ENCODE measurements at regions of chr3 and their contacts with region 1.

Region 1: DNA sequence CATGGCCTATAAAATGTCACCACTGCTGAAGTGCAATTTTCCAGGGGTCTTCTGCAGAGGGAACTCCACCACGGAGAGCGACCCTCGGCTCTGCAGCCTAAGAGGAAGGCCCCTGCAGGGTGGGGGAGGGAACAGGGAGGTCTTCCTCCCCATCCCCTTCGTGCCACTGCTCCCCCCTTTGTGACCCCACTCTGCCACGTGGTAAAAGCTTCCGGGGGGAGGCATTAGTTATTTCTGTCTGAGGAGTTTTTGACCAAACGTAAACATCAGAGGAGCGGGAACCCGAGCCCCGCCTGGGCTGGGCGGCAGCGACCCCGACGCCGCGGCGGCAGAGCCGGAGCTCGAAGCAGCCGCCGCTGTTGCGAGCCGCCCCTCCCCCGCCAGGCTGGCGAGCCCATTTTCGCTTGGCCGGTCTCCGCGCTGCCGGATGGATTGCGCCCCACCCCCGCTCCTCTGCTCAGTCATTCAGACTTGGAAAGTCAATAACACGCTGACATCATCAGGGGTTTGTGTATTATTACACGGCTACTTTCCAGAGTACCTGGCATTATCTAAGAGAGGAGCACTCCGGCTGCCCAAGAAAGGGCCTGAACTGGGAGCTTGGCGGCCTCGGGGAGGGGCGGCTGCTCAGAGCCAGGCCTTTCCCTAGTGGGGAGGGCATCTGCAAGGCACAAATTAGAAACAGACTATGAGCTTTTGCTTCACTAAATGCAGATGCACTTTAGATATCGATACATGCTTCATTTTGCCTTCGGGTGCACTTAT is 162.5 kb upstream of the TBL1XR1 start:
- DNase-seq: peak; percentile 97
- H3K4me3 Mint-ChIP-seq: peak overlapping the region; percentile 70
- H3K27ac Mint-ChIP-seq: peak overlapping the region; percentile 94
- H3K4me1 Mint-ChIP-seq: peaks cover 55% of the 10 kb centered on the region
- H3K27me3 Mint-ChIP-seq: no peaks in the 10 kb centered on the region

Region 2: GRCh38 chr3:177057768-177058167 is 302.0 kb before region 1 on chr3:
- CTCF ChIA-PET with region 1: interaction called, 4 read pairs
- POLR2A ChIA-PET with region 1: interaction called, 4 read pairs
- intact Hi-C with region 1: loop called (anchors 1 kb)
- DNase-seq: peak; percentile 80
- H3K4me3 Mint-ChIP-seq: no peak overlapping the region
- H3K27ac Mint-ChIP-seq: no peak overlapping the region
- H3K4me1 Mint-ChIP-seq: peaks cover 39% of the 10 kb centered on the region
- H3K27me3 Mint-ChIP-seq: no peaks in the 10 kb centered on the region

Region 3: DNA sequence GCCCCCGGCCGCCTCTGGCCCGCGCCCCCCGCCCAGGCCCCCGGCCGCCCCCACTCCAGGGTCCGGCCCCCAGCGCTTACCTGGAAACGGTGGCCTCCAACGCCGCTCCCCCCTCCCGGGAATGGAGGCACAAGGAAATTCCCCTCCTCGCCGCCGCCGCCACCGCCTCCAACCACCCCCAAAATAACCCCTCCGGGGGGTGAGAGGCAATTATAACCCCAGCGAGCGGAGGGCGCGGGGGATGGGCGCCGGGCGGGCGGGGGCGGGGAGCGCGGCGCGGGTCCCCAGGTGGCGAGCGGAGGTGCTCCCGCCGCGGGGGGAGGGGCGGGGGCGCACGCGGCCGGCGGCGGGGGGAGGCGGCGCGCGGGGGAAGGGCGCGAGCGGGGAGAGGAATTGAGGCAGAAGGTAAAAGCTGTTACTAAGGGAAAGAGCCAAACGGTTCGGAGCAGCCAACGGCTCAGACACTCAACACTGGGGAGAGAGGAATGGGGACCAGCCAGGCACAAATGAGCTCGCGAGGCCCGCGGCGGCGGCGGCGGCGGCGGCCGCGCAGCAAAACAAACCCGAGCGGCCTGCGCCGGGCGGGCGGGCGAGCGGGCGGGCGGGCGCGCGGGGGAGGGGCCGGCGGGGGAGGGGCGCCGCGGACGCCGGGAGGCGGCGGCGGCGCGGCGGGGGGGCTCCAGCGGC is 162.6 kb before region 1 on chr3 and contains the start of gene TBL1XR1:
- CTCF ChIA-PET with region 1: interaction called, 6 read pairs
- POLR2A ChIA-PET with region 1: interaction called, 79 read pairs
- intact Hi-C with region 1: loop called (anchors 1 kb)
- DNase-seq: peak; percentile 89
- H3K4me3 Mint-ChIP-seq: peak within 1 kb of the TSS; percentile 90
- H3K27ac Mint-ChIP-seq: peak within 1 kb of the TSS; percentile 99
- H3K4me1 Mint-ChIP-seq: peaks cover 51% of the 10 kb centered on the region
- H3K27me3 Mint-ChIP-seq: no peaks in the 10 kb centered on the region
- total RNA-seq, gene TBL1XR1: 158 to 167 TPM

Region 4: DNA sequence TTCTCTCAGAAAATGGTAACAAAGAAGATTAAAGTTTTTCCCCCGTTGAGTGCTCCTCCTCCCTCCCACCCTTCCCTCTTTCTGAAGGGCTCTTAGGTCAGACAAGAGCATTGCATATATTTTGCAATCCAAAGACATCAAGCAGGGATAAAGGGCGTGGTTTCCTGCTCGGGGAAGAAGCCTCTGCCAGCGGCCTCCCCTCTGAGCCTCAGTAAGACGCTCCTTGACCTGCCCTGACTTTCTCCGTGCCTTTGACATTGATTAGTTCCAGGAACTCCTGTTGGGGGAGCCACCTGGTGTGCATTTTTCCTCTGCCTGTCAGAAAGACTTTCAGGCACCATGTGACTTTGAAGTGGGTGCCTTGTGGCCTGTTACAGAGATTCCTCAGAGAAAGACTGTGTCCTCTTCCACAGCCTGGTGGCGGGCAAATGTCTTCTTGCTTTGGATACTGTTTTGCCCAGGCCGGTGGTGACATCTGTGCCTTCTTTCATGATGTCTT is 75.3 kb before region 1 on chr3:
- CTCF ChIA-PET with region 1: no interaction called
- POLR2A ChIA-PET with region 1: no interaction called
- intact Hi-C with region 1: no loop called
- DNase-seq: peak; percentile 59
- H3K4me3 Mint-ChIP-seq: no peak overlapping the region
- H3K27ac Mint-ChIP-seq: no peak overlapping the region
- H3K4me1 Mint-ChIP-seq: peaks cover 23% of the 10 kb centered on the region
- H3K27me3 Mint-ChIP-seq: no peaks in the 10 kb centered on the region

Region 5: GRCh38 chr3:177345049-177345972 is 14.5 kb before region 1 on chr3:
- CTCF ChIA-PET with region 1: interaction called, 4 read pairs
- POLR2A ChIA-PET with region 1: interaction called, 23 read pairs
- intact Hi-C with region 1: loop called (anchors 1 kb)
- DNase-seq: peak; percentile 86
- H3K4me3 Mint-ChIP-seq: peak overlapping the region; percentile 20
- H3K27ac Mint-ChIP-seq: peak overlapping the region; percentile 90
- H3K4me1 Mint-ChIP-seq: peaks cover 40% of the 10 kb centered on the region
- H3K27me3 Mint-ChIP-seq: no peaks in the 10 kb centered on the region

Region 6: DNA sequence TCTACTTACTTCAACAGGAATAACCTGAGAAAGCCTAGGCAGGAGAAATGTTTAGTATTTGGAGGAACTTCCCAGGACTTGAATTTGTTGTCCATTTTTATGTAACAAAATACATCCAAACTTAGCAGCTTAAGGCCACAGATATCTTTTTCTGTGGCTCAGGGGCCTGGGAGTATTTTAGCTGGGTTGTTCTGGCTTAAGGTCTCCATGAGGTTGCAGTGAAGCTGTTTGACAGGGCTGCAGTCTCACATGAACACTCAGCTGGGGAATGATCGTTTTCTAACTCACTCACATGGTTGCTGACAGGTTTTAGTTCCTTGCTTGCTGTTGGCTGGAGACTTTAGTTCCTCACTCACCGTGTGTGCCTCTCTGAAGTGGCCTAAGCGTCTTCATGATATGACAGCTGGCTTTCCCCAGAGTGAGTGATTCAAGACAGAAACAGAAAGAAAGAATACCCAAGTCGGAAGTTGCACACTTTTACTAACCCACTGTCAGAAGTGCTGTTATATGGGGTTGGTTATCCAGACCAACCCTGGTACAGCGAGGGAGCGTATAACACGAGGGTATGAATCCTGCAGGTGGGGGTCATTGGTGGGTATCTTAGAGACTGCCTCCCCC is 67.2 kb after region 1 on chr3:
- CTCF ChIA-PET with region 1: interaction called, 4 read pairs
- POLR2A ChIA-PET with region 1: interaction called, 10 read pairs
- intact Hi-C with region 1: loop called (anchors 1 kb)
- DNase-seq: peak; percentile 83
- H3K4me3 Mint-ChIP-seq: peak overlapping the region; percentile 55
- H3K27ac Mint-ChIP-seq: peak overlapping the region; percentile 91
- H3K4me1 Mint-ChIP-seq: peaks cover 42% of the 10 kb centered on the region
- H3K27me3 Mint-ChIP-seq: peaks cover 7% of the 10 kb centered on the region

Region 7: DNA sequence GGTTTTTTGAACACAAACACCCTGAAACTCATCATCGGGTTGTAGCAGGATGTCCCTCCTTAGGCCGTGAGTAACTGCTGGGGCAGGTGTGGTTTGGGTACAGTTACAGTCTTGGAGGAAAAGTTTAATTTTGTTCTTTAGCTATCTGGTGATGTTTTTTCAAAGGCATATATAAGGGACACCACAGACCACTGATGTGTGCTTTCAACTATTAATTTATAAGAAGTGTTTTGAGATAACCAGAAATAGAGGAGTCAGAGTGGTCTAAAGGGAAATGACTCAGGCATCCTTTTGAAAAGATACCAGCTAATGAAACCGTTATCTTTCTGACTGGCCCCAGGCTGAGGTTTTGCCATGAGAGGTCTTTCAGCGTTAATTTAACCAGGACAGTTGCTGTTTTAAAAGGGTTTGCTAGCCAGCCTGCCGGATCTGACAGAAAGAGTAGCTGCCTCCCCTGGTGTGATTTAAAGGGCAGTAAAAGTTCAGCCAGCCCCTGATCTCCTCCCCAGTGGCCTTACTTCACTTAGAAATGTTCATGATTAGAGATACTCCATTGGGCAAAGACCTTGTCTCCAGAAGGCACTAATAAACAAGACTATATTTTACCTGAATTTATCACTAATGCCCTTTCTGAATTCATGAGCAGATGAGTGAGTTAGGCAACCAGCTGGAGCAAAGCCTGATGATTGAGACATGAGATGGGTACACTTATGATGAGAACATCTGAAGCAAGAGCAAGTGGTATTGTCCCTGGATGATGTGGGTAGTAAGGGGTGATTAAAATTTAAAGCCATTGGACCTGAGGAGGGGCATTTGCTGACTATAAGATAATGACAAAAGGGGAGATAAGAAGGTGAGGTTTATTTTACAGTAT is 320.0 kb after region 1 on chr3:
- CTCF ChIA-PET with region 1: no interaction called
- POLR2A ChIA-PET with region 1: no interaction called
- intact Hi-C with region 1: loop called (anchors 1 kb)
- DNase-seq: peak; percentile 64
- H3K4me3 Mint-ChIP-seq: no peak overlapping the region
- H3K27ac Mint-ChIP-seq: peak overlapping the region; percentile 69
- H3K4me1 Mint-ChIP-seq: peaks cover 21% of the 10 kb centered on the region
- H3K27me3 Mint-ChIP-seq: no peaks in the 10 kb centered on the region

Region 8: DNA sequence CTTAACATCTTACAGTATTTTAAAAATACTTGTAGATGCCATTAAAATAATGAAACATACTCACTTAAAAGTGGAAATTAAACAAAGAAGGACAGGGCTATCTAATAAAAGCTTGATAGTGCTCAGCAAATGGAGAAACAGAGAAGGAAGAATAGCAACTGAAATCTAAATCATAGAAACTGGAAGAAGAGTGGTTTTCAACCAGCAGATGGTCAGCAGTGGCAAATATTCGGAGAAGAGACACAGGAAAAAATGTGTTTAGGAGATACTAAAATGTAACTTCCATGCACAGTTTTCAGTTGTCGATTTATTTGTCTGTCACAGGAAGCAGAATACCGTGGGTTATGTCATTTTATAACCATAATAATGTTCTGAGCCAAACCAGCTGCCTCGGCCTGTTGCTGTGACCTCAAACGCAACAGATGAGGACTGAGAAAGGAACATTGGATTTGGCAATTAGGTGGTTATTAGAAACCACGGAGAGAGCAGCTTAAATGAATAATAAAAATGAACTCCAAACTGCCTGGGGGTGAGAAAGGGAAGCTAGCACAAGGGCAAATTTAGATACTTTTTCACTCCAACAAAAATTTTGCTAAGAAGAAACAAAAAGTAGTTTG is 929.9 kb after region 1 on chr3:
- CTCF ChIA-PET with region 1: no interaction called
- POLR2A ChIA-PET with region 1: no interaction called
- intact Hi-C with region 1: no loop called
- DNase-seq: no peak
- H3K4me3 Mint-ChIP-seq: no peak overlapping the region
- H3K27ac Mint-ChIP-seq: no peak overlapping the region
- H3K4me1 Mint-ChIP-seq: no peaks in the 10 kb centered on the region
- H3K27me3 Mint-ChIP-seq: peaks cover 6% of the 10 kb centered on the region

Measured in activated CD4-positive, alpha-beta memory T cell treated with anti-CD3 and anti-CD28 coated beads for 36 hours (primary cell).